ENCODE measurements at regions of chr1 and their contacts with region 1.

Region 1: GRCh38 chr1:28914228-28915030 is at the start of gene EPB41:
- DNase-seq: peak; percentile 87 to 91 (median 87)
- H3K4me3 ChIP-seq: peak within 1 kb of the TSS; percentile 83 to 90
- H3K4me3 Mint-ChIP-seq: peak within 1 kb of the TSS; percentile 98 to 99 (median 99)
- H3K27ac ChIP-seq: peak within 1 kb of the TSS; percentile 65
- H3K27ac Mint-ChIP-seq: peak within 1 kb of the TSS; percentile 93 to 98 (median 96)
- H3K4me1 ChIP-seq: peaks cover 50% of the 10 kb centered on the region
- H3K4me1 Mint-ChIP-seq: peaks cover 34 to 55% (median 40%) of the 10 kb centered on the region in 4 donors
- H3K27me3 ChIP-seq: no peaks in the 10 kb centered on the region
- H3K27me3 Mint-ChIP-seq: no peaks in the 10 kb centered on the region
- total RNA-seq, gene EPB41: 320 to 321 TPM

Region 2: GRCh38 chr1:28779751-28780408 is 134.5 kb before region 1 on chr1:
- CTCF ChIA-PET with region 1: no interaction called
- POLR2A ChIA-PET with region 1: no interaction called
- intact Hi-C with region 1: no loop called
- DNase-seq: no peak
- H3K4me3 ChIP-seq: no peak overlapping the region
- H3K4me3 Mint-ChIP-seq: no peak overlapping the region
- H3K27ac ChIP-seq: no peak overlapping the region
- H3K27ac Mint-ChIP-seq: peak overlapping the region in 2 of 7 donors; percentile 24 to 77
- H3K4me1 ChIP-seq: peaks cover 2% of the 10 kb centered on the region
- H3K4me1 Mint-ChIP-seq: peaks cover 3 to 11% (median 7%) of the 10 kb centered on the region in 4 donors
- H3K27me3 ChIP-seq: no peaks in the 10 kb centered on the region
- H3K27me3 Mint-ChIP-seq: no peaks in the 10 kb centered on the region

Region 3: DNA sequence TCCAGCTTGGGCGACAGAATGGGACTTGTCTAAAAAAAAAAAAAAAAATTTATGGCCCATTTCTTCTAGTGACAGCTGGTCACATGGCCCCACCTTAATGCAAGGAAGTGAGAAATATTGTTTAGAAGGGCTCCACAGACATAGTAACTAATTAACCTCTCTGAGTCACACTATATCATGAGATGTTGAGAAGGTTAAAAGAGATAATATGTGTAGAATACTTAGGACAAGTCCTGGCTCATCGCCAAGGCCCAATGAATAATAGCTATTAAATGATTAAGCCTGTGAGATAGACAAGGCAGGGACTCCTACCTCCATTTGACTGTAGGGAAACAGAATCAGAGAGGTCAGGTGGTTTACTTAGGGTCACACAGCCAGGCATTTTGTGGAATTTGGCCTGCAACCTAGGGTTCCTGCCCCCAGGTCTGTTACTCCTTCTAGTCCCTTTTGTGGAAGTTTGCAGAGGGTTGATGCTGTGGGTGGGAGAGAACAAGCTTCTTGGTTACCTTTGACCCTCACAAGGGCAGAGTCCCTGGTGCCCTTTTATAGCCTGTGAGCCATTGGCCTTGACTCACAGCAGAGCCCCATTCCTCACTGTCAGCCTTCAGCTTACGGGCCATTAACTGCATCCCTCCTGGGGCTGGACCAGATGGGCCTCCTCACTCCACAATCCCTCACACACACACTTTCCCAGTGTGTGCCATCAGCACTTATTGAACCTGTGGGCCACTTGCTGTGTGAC is 53.9 kb before region 1 on chr1:
- CTCF ChIA-PET with region 1: no interaction called
- POLR2A ChIA-PET with region 1: no interaction called
- intact Hi-C with region 1: no loop called
- DNase-seq: no peak
- H3K4me3 ChIP-seq: no peak overlapping the region
- H3K4me3 Mint-ChIP-seq: no peak overlapping the region
- H3K27ac ChIP-seq: no peak overlapping the region
- H3K27ac Mint-ChIP-seq: no peak overlapping the region
- H3K4me1 ChIP-seq: no peaks in the 10 kb centered on the region
- H3K4me1 Mint-ChIP-seq: no peaks in the 10 kb centered on the region
- H3K27me3 ChIP-seq: no peaks in the 10 kb centered on the region
- H3K27me3 Mint-ChIP-seq: peaks cover 0 to 3% of the 10 kb centered on the region in 2 donors

Region 4: DNA sequence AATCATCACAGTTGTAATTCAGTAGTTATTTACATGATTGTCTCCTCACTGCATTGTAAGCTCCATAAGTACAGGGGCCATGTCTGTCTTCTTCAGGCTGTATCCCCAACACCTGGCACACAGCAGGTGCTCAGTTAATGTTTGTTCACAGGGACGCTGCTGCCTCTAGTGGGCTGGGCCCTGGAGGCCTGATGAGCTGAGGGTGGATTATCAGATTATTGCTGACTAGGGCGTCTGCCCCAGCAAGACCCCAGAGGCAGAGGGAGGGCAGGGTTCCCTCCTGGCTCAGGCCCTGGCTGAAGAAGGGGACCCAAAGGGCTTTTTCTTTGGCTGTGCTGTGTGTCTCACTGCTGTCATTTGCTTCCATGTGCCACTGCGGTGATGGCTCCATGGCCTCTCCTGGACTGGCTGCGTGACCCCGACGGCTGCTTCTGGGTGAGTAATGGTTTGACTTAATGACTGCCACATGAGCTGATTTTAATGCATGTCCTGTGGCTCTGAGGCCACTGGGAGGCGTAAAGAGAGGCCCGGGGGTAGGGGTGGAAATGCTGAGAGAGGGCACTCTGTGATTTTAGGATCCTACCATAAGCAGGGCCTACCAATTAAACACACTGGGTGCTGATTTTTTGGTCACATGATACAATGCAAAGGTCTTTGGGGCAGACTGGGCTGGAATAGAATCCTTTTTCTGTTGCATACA is 20.9 kb before region 1 on chr1:
- CTCF ChIA-PET with region 1: interaction called, 3 read pairs
- POLR2A ChIA-PET with region 1: interaction called, 23 read pairs
- intact Hi-C with region 1: no loop called
- DNase-seq: peak in 4 of 5 donors; percentile 26 to 33 (median 30)
- H3K4me3 ChIP-seq: no peak overlapping the region
- H3K4me3 Mint-ChIP-seq: peak overlapping the region in 1 of 8 donors; percentile 35
- H3K27ac ChIP-seq: no peak overlapping the region
- H3K27ac Mint-ChIP-seq: peak overlapping the region in 2 of 7 donors; percentile 30 to 72
- H3K4me1 ChIP-seq: peaks cover 40% of the 10 kb centered on the region
- H3K4me1 Mint-ChIP-seq: peaks cover 38 to 62% (median 46%) of the 10 kb centered on the region in 4 donors
- H3K27me3 ChIP-seq: no peaks in the 10 kb centered on the region
- H3K27me3 Mint-ChIP-seq: no peaks in the 10 kb centered on the region

Region 5: GRCh38 chr1:28899267-28899666 is 15.2 kb before region 1 on chr1:
- CTCF ChIA-PET with region 1: interaction called, 22 read pairs
- POLR2A ChIA-PET with region 1: interaction called, 7 read pairs
- intact Hi-C with region 1: no loop called
- DNase-seq: no peak
- H3K4me3 ChIP-seq: no peak overlapping the region
- H3K4me3 Mint-ChIP-seq: peak overlapping the region in 1 of 8 donors; percentile 47
- H3K27ac ChIP-seq: no peak overlapping the region
- H3K27ac Mint-ChIP-seq: peak overlapping the region; percentile 5 to 89 (median 36)
- H3K4me1 ChIP-seq: peaks cover 34% of the 10 kb centered on the region
- H3K4me1 Mint-ChIP-seq: peaks cover 31 to 40% (median 38%) of the 10 kb centered on the region in 4 donors
- H3K27me3 ChIP-seq: no peaks in the 10 kb centered on the region
- H3K27me3 Mint-ChIP-seq: no peaks in the 10 kb centered on the region

Region 6: GRCh38 chr1:28926629-28927265 is 12.3 kb after region 1 on chr1:
- CTCF ChIA-PET with region 1: interaction called, 14 read pairs
- POLR2A ChIA-PET with region 1: interaction called, 101 read pairs
- intact Hi-C with region 1: loop called (anchors 1 kb)
- DNase-seq: peak; percentile 77 to 85 (median 82)
- H3K4me3 ChIP-seq: peak overlapping the region; percentile 0 to 21
- H3K4me3 Mint-ChIP-seq: peak overlapping the region; percentile 56 to 84 (median 76)
- H3K27ac ChIP-seq: peak overlapping the region; percentile 67
- H3K27ac Mint-ChIP-seq: peak overlapping the region; percentile 72 to 97 (median 85)
- H3K4me1 ChIP-seq: peaks cover 93% of the 10 kb centered on the region
- H3K4me1 Mint-ChIP-seq: peaks cover 38 to 71% (median 54%) of the 10 kb centered on the region in 4 donors
- H3K27me3 ChIP-seq: no peaks in the 10 kb centered on the region
- H3K27me3 Mint-ChIP-seq: no peaks in the 10 kb centered on the region

Region 7: GRCh38 chr1:28933277-28933676 is 18.8 kb after region 1 on chr1:
- CTCF ChIA-PET with region 1: interaction called, 14 read pairs
- POLR2A ChIA-PET with region 1: interaction called, 101 read pairs
- intact Hi-C with region 1: no loop called
- DNase-seq: peak in 4 of 5 donors; percentile 26 to 31 (median 30)
- H3K4me3 ChIP-seq: no peak overlapping the region
- H3K4me3 Mint-ChIP-seq: peak overlapping the region; percentile 42 to 83 (median 71)
- H3K27ac ChIP-seq: no peak overlapping the region
- H3K27ac Mint-ChIP-seq: peak overlapping the region; percentile 32 to 92 (median 63)
- H3K4me1 ChIP-seq: peaks cover 98% of the 10 kb centered on the region
- H3K4me1 Mint-ChIP-seq: peaks cover 54 to 78% (median 68%) of the 10 kb centered on the region in 4 donors
- H3K27me3 ChIP-seq: no peaks in the 10 kb centered on the region
- H3K27me3 Mint-ChIP-seq: no peaks in the 10 kb centered on the region

Region 8: DNA sequence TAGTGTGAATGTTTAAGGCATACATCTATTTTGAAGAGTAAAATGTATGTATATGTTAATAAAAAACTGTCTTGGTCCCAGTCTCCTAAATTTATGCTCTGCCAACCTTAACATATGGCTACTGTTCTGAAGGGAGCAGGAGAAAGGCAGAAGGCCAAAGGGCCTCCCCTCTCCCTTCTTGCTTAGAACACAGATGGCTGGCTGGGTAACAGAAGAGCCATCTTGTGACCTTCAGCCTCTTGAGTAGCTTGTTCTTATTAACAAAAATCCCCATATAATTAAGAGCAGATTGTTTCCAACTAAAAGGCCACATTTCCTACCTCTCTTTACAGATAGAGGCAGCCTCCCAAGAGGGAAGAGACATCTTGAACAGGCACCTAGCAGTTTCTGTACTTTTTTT is 36.0 kb after region 1 on chr1:
- CTCF ChIA-PET with region 1: no interaction called
- POLR2A ChIA-PET with region 1: interaction called, 6 read pairs
- intact Hi-C with region 1: loop called (anchors 5 kb)
- DNase-seq: no peak
- H3K4me3 ChIP-seq: no peak overlapping the region
- H3K4me3 Mint-ChIP-seq: no peak overlapping the region
- H3K27ac ChIP-seq: no peak overlapping the region
- H3K27ac Mint-ChIP-seq: peak overlapping the region in 2 of 7 donors; percentile 25 to 77
- H3K4me1 ChIP-seq: peaks cover 54% of the 10 kb centered on the region
- H3K4me1 Mint-ChIP-seq: peaks cover 28 to 69% (median 49%) of the 10 kb centered on the region in 4 donors
- H3K27me3 ChIP-seq: no peaks in the 10 kb centered on the region
- H3K27me3 Mint-ChIP-seq: no peaks in the 10 kb centered on the region

Region 9: GRCh38 chr1:29033829-29034466 is 119.5 kb after region 1 on chr1:
- CTCF ChIA-PET with region 1: interaction called, 9 read pairs
- POLR2A ChIA-PET with region 1: interaction called, 14 read pairs
- intact Hi-C with region 1: no loop called
- DNase-seq: peak in 4 of 5 donors; percentile 34 to 48 (median 42)
- H3K4me3 ChIP-seq: no peak overlapping the region
- H3K4me3 Mint-ChIP-seq: no peak overlapping the region
- H3K27ac ChIP-seq: no peak overlapping the region
- H3K27ac Mint-ChIP-seq: peak overlapping the region in 1 of 7 donors; percentile 92
- H3K4me1 ChIP-seq: no peaks in the 10 kb centered on the region
- H3K4me1 Mint-ChIP-seq: peaks cover 0 to 4% (median 0%) of the 10 kb centered on the region in 4 donors
- H3K27me3 ChIP-seq: no peaks in the 10 kb centered on the region
- H3K27me3 Mint-ChIP-seq: no peaks in the 10 kb centered on the region

Measured in CD4-positive, alpha-beta memory T cell (primary cell).